Endothelial cell of umbilical vein (primary cell): ENCODE measurements at regions of chr5 and their contacts with region 1.

Region 1: DNA sequence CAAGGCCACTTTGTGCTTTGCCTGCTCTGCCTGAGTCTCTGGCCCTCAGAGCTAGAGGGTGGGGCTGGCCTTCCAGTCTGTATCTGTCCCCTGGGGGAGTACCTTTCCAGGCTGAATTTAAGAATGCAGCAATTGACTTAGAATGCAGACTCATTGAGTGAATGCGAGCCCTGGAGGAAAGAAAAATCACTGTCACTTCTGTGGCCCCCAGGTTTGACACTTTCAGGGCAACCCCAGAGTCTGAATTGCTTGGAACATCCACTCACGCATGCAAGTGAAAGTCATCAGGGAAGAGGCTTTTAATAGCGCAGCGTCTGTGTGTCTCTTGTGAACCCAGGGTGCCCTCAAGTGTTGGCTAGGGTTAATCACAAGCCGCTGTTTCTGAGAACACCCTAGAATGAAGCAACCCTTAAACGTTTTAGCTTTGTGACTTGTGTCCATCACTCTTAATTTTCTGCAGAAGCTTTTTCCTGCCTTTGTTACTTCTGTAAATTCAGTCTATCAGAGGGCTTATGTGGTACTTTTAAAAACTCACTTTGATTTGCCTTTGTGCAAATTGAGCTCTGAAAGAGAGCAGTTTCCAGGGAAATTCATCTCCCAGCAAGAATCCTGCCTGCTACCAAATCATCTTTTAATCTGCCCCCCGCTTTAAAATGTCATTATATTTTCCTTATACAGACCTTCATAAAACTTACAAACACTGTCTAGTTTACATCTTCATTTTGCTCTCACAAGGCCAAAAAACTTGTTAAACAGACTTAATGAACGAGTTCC is 146.8 kb upstream of the IQGAP2 start:
- DNase-seq: peak; percentile 57
- H3K4me3 ChIP-seq: no peak overlapping the region
- H3K27ac ChIP-seq: no peak overlapping the region
- H3K4me1 ChIP-seq: no peaks in the 10 kb centered on the region
- H3K27me3 ChIP-seq: peaks cover 0 to 7% of the 10 kb centered on the region in 2 experiments
- CTCF ChIP-seq: peak; percentile 43 to 62
- POLR2A ChIP-seq: no peak

Region 2: GRCh38 chr5:74766849-74767578 is 1489.3 kb before region 1 on chr5 and contains the starts of genes GFM2 and NSA2:
- CTCF ChIA-PET with region 1: no interaction called
- POLR2A ChIA-PET with region 1: no interaction called
- dilution Hi-C with region 1: no loop called
- intact Hi-C with region 1: loop called (anchors 2 kb)
- DNase-seq: peak; percentile 97
- H3K4me3 ChIP-seq: peak within 1 kb of the TSS; percentile 73 to 98 (median 86)
- H3K27ac ChIP-seq: peak within 1 kb of the TSS; percentile 16
- H3K4me1 ChIP-seq: peaks cover 17% of the 10 kb centered on the region
- H3K27me3 ChIP-seq: no peaks in the 10 kb centered on the region
- CTCF ChIP-seq: no peak
- POLR2A ChIP-seq: peak; percentile 63
- total RNA-seq, gene GFM2: 23.3 and 29.0 TPM in 2 replicates
- total RNA-seq, gene NSA2: 72.4 and 73.8 TPM in 2 replicates

Region 3: DNA sequence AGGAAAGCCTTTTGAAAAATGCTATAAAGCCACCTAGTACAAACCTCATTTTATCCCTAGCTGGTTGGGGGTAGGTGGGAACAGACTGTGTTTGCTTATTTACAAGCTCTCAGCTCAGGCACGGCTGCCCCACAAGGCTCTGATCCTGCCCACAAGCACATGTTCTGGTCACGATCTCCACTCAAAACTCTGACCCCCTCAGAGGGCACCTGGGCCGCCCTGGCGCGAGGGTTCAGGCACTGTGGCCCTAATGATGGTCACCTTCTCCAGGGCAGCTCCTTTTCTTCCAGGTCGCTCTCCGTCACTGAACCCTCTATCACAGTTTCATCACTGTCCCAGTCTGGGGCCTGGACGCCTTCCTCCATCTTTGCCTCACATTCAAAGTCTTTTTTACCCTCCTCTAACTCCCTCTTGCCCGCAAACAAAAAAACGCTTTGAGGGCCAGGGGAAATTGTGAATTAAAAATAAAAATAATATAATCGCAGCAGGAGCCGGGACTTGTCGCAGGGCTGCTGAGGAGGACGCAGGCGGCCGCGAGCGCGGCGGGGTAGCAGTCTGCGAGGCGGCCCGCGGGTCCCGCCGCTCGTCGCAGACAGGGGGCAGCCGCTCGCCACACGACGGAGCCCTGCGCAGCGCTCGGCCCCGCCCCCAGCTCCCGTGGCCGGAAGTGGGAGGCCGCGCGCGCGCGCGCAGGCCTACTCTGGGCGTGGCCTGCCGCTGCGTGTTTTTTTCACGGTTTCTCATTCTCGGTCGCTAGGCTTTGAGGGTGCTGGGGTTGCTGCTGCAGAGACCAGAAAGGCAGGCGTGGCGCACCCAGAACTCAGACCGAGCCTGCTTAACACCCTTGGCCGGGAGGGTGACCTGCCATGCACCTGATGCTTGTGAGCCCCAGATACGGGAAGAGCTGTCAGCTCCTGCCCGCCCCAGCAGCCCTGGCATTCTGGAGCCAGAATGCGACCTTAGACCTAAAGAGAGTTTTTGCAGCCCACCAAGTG is 1019.7 kb before region 1 on chr5 and contains the start of gene ANKRD31:
- CTCF ChIA-PET with region 1: interaction called, 3 read pairs
- POLR2A ChIA-PET with region 1: no interaction called
- dilution Hi-C with region 1: no loop called
- intact Hi-C with region 1: loop called (anchors 2 kb)
- DNase-seq: peak; percentile 71
- H3K4me3 ChIP-seq: peak within 1 kb of the TSS; percentile 8 to 57 (median 53)
- H3K27ac ChIP-seq: no peak within 1 kb of the TSS
- H3K4me1 ChIP-seq: peaks cover 3% of the 10 kb centered on the region
- H3K27me3 ChIP-seq: no peaks in the 10 kb centered on the region
- CTCF ChIP-seq: peak; percentile 67 to 86
- POLR2A ChIP-seq: peak; percentile 38
- total RNA-seq, gene ANKRD31: not detected in 2 replicates

Region 4: DNA sequence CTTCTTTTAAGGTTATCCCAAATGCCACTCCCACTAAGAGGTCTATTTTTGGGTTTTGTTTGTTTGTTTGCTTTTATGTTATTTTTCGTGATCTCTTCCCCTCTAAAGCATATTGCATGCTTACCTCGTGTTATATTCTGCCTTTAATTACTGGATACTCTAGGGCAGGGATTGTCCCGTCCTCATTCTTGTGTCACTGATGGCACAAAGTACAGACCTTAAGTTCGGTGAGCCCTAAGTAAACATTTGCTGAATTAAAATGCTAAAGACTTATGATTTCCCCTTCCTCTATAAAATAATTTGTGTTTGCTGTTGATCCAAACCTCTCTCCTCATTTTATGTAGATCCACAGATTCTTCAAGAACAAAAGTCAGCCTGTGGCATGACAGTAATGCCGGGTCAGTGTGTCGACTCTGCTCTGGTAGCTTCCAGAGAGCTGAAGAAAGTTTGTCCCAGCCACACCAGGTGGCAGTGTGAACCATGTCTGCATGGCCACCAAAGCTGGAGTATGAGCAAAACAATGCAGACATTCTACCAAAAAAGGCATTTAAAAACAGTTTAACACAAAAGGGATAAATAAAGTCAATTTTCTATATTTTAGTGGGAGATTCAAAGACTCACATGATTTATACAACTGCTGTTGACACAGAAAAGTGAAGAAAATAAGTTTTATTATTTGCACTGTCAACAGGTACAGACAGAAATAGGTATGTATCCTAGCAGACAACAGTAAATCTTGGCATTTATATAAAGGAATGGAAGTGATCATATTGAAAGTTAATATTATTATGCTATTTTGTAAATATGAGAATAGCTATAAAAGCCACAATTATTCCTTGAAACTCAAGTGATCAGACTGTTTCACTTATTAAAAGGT is 521.2 kb before region 1 on chr5:
- CTCF ChIA-PET with region 1: interaction called, 6 read pairs
- POLR2A ChIA-PET with region 1: no interaction called
- dilution Hi-C with region 1: no loop called
- intact Hi-C with region 1: loop called (anchors 1 kb)
- DNase-seq: no peak
- H3K4me3 ChIP-seq: no peak overlapping the region
- H3K27ac ChIP-seq: no peak overlapping the region
- H3K4me1 ChIP-seq: no peaks in the 10 kb centered on the region
- H3K27me3 ChIP-seq: peaks cover 3 to 14% of the 10 kb centered on the region in 2 experiments
- CTCF ChIP-seq: peak; percentile 21 to 37
- POLR2A ChIP-seq: no peak

Region 5: DNA sequence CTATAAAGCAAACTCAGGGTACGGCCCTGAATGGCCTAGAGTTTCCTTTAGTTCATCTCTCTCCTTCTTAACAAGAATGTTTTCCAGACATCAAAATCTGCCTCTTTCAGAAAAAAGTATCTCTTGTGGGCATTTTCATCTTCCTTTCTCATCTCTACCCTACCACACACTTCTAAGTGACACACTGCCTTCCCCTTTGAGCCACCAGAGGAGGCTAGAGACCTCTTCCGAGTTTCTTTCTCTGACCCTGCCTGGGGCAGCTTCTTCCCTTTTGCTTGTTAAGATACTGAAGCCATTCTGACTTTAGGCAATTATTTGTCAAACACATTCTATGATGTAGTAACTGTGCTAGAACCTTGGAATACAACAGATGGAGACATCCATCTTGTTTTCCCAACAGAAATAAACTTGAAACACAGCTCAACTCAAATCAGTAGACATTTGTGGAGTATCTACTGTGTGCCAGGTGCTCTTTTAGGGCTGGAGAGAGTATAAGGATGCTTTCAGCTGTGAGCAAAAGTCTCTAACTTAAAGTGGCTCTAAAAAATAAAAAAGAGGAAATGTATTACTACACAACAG is 181.7 kb before region 1 on chr5:
- CTCF ChIA-PET with region 1: interaction called, 5 read pairs
- POLR2A ChIA-PET with region 1: no interaction called
- dilution Hi-C with region 1: no loop called
- intact Hi-C with region 1: loop called (anchors 1 kb)
- DNase-seq: peak; percentile 6
- H3K4me3 ChIP-seq: no peak overlapping the region
- H3K27ac ChIP-seq: no peak overlapping the region
- H3K4me1 ChIP-seq: no peaks in the 10 kb centered on the region
- H3K27me3 ChIP-seq: peaks cover 0 to 6% of the 10 kb centered on the region in 2 experiments
- CTCF ChIP-seq: peak in 1 of 2 donors; percentile 45
- POLR2A ChIP-seq: no peak

Region 6: GRCh38 chr5:76402886-76403765 is 146.8 kb after region 1 on chr5 and contains the start of gene IQGAP2:
- CTCF ChIA-PET with region 1: no interaction called
- POLR2A ChIA-PET with region 1: no interaction called
- dilution Hi-C with region 1: no loop called
- intact Hi-C with region 1: no loop called
- DNase-seq: peak; percentile 51
- H3K4me3 ChIP-seq: peak within 1 kb of the TSS; percentile 42 to 70 (median 50)
- H3K27ac ChIP-seq: no peak within 1 kb of the TSS
- H3K4me1 ChIP-seq: peaks cover 7% of the 10 kb centered on the region
- H3K27me3 ChIP-seq: peaks cover 34 to 54% of the 10 kb centered on the region in 2 experiments
- CTCF ChIP-seq: peak; percentile 66 to 82
- POLR2A ChIP-seq: no peak
- total RNA-seq, gene IQGAP2: 4.7 and 5.7 TPM in 2 replicates

Region 7: GRCh38 chr5:76805850-76806505 is 549.7 kb after region 1 on chr5:
- CTCF ChIA-PET with region 1: no interaction called
- POLR2A ChIA-PET with region 1: no interaction called
- dilution Hi-C with region 1: no loop called
- intact Hi-C with region 1: no loop called
- DNase-seq: peak; percentile 77
- H3K4me3 ChIP-seq: no peak overlapping the region
- H3K27ac ChIP-seq: peak overlapping the region; percentile 83
- H3K4me1 ChIP-seq: peaks cover 40% of the 10 kb centered on the region
- H3K27me3 ChIP-seq: no peaks in the 10 kb centered on the region
- CTCF ChIP-seq: no peak
- POLR2A ChIP-seq: no peak